Left lung (tissue), 14 donors: ENCODE measurements at regions of chr6 and their contacts with region 1.

Region 1: DNA sequence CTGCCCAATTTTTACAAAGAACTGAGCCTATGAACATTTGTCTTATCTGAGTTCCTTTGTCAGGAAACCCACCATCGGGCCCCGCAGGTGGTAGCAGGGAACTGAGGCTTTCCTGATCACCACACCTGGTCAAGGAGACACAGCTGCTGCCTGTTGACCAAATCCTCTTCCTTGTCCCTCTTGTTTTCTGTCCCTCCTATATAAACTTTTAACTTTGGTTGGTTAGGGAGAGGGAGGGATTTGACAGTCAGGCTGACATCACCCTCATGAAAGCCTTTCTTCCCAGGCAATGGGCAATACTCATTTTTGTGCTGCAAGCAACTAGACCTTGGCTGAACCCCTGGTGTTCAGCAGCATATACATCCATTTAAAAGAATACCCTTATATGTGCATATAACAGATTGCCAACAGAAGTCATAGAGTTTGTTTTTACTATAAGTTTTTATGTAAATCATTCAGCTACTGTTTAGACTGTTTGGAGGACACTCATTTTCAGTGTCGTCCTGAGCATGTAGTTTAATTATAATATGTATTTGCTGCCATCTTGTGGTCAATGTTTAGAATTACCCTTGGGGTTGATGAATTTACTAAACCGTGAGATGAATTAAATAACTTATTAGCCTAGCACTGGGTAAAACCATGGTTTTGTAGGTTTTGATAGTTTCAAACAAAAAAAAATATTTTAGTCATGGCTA is 17.0 kb downstream of the CRISP1 start:
- DNase-seq: peak in 2 of 4 donors; percentile 42 to 46
- ATAC-seq: peak; percentile 82
- H3K4me3 ChIP-seq: no peak overlapping the region
- H3K27ac ChIP-seq: no peak overlapping the region
- H3K4me1 ChIP-seq: no peaks in the 10 kb centered on the region
- H3K27me3 ChIP-seq: no peaks in the 10 kb centered on the region
- CTCF ChIP-seq: peak; percentile 56 to 69

Region 2: GRCh38 chr6:49531774-49532569 is 317.4 kb before region 1 on chr6:
- intact Hi-C with region 1: loop called in 1 of 2 experiments (anchors 10 kb)
- DNase-seq: peak in 1 of 4 donors; percentile 55
- ATAC-seq: peak; percentile 95
- H3K4me3 ChIP-seq: no peak overlapping the region
- H3K27ac ChIP-seq: no peak overlapping the region
- H3K4me1 ChIP-seq: no peaks in the 10 kb centered on the region
- H3K27me3 ChIP-seq: no peaks in the 10 kb centered on the region
- CTCF ChIP-seq: peak; percentile 37 to 62

Region 3: GRCh38 chr6:49625140-49625539 is 224.2 kb before region 1 on chr6:
- intact Hi-C with region 1: loop called in 1 of 2 experiments (anchors 10 kb)
- DNase-seq: no peak
- ATAC-seq: no peak
- H3K4me3 ChIP-seq: no peak overlapping the region
- H3K27ac ChIP-seq: no peak overlapping the region
- H3K4me1 ChIP-seq: no peaks in the 10 kb centered on the region
- H3K27me3 ChIP-seq: no peaks in the 10 kb centered on the region
- CTCF ChIP-seq: no peak

Region 4: GRCh38 chr6:50056242-50056641 is 206.9 kb after region 1 on chr6:
- intact Hi-C with region 1: no loop called
- DNase-seq: no peak
- ATAC-seq: no peak
- H3K4me3 ChIP-seq: no peak overlapping the region
- H3K27ac ChIP-seq: no peak overlapping the region
- H3K4me1 ChIP-seq: no peaks in the 10 kb centered on the region
- H3K27me3 ChIP-seq: no peaks in the 10 kb centered on the region
- CTCF ChIP-seq: no peak